GM10248 (cell line): ENCODE measurements at regions of chr14 and their contacts with region 1.

Region 1: DNA sequence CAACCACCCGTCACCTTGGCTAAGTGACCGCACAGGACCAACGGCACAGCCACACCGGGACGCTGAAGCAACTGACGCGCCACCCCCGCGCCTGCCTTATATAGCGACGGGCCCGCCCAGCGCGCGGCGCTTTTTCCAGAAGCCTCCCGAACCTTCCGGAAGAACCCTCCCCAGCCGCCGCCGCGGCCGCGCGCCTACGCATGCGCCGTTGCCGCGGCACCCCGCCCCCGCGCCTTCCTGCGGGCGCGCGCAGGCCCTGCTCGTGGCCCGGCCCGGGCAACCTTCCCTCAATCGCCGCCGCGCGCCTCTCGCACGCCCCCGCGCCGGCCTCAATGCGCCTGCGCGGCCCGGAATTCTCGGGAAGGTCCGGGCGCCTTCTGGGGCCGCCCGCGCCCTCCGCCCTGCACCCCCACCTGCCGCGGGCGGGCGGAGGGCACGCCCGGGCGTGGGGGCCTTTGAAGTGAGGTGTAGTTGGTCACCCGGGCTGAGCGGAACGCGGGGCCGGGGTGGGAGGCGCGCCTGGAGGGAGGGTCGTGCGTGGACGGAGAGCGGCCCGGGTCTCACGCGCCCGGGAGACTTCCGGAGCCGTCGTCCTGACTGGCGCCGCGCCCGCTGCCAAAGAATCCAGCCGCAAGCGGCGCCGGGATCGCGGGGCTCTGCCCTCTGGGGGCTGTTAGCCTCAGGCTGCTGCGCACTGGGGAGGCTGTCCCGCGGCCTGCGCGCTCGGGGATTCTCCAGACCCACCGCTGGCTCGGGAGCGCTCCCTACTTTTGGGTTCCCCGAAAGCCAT is at the start of gene HSP90AA1:
- DNase-seq: peak; percentile 97
- CTCF ChIP-seq: no peak

Region 2: GRCh38 chr14:102105369-102105768 is 18.2 kb after region 1 on chr14:
- CTCF ChIA-PET with region 1: interaction called, 10 read pairs
- POLR2A ChIA-PET with region 1: no interaction called
- DNase-seq: no peak
- CTCF ChIP-seq: no peak